ENCODE measurements at regions of chr3 and their contacts with region 1.

Region 1: GRCh38 chr3:63911873-63912767 is at the start of gene SCAANT1:
- DNase-seq: peak; percentile 73 to 86
- H3K4me3 ChIP-seq: peak within 1 kb of the TSS; percentile 65
- H3K27ac ChIP-seq: peak within 1 kb of the TSS; percentile 55
- H3K4me1 ChIP-seq: peaks cover 39% of the 10 kb centered on the region
- H3K27me3 ChIP-seq: no peaks in the 10 kb centered on the region
- CTCF ChIP-seq: no peak
- total RNA-seq, gene SCAANT1: not detected in 2 replicates

Region 2: GRCh38 chr3:62318750-62319569 is 1593.2 kb before region 1 on chr3:
- CTCF ChIA-PET with region 1: no interaction called
- POLR2A ChIA-PET with region 1: no interaction called
- intact Hi-C with region 1: loop called (anchors 10 kb)
- DNase-seq: peak; percentile 61 to 72
- H3K4me3 ChIP-seq: peak overlapping the region; percentile 90
- H3K27ac ChIP-seq: no peak overlapping the region
- H3K4me1 ChIP-seq: 0 out of 2 replicates have a peak, but pooled peaks cover 5% of the 10 kb centered on the region
- H3K27me3 ChIP-seq: no peaks in the 10 kb centered on the region
- CTCF ChIP-seq: no peak

Region 3: GRCh38 chr3:63845215-63845614 is 66.9 kb before region 1 on chr3:
- CTCF ChIA-PET with region 1: no interaction called
- POLR2A ChIA-PET with region 1: no interaction called
- intact Hi-C with region 1: no loop called
- DNase-seq: no peak
- H3K4me3 ChIP-seq: no peak overlapping the region
- H3K27ac ChIP-seq: no peak overlapping the region
- H3K4me1 ChIP-seq: peaks cover 17% of the 10 kb centered on the region
- H3K27me3 ChIP-seq: no peaks in the 10 kb centered on the region
- CTCF ChIP-seq: no peak

Region 4: DNA sequence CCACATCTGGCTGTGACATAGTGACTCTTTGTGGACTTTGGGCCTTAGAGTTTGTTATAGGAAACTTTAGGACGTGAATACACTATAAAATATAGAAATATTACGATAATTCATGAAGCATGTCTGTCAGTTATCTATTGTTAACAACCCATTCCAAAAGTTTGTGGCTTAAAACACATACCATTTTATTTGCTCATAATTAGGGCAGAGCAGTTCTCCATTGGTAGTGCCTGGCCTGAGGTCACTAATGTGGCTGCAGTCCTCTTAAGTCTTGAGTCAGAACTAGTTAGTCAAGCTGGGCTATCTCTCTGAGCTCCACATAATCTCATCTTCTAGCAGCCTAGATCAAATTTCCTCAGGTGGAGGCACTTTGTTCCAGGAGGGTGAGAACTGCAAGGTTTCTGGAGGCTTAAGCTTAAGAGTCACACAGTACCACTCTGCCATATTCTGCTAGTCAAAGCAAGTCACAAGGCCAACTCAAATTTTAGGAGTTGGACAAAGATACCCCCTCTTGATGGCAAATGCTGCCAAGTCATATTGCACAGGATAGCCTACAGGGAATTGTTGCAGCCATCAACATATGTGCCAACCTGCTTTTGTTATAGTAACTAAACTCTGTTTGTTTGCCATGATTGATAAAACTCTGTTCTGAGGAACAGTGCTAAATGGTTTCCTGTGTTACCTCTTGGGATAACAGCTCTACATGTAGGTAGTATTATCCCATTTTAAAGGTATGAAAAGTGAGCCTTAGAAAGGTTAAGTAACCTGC is 39.8 kb before region 1 on chr3:
- CTCF ChIA-PET with region 1: no interaction called
- POLR2A ChIA-PET with region 1: no interaction called
- intact Hi-C with region 1: loop called (anchors 2 kb)
- DNase-seq: peak; percentile 63 to 91
- H3K4me3 ChIP-seq: peak overlapping the region; percentile 26; the same call in 1 of the 2 replicates
- H3K27ac ChIP-seq: peak overlapping the region; percentile 64
- H3K4me1 ChIP-seq: peaks cover 30% of the 10 kb centered on the region
- H3K27me3 ChIP-seq: no peaks in the 10 kb centered on the region
- CTCF ChIP-seq: no peak

Region 5: DNA sequence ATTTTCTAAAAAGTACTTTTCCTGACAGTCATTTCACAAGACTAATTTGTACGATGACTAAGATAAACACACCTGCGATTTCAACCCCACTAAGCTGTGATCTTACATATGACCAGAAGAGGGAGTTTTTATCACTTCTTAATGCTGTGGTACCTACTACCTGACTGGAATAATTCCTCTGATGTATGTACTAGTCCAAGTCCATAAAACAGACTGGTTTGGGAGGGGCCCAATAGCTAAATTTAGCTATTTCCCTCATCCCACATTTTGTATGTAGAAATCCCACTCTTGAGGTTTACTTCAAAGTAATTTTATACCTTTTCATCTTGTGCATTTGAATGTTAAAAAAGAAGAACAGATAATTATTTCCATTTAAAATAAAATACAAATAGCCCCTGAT is 49.8 kb after region 1 on chr3:
- CTCF ChIA-PET with region 1: interaction called, 19 read pairs
- POLR2A ChIA-PET with region 1: no interaction called
- intact Hi-C with region 1: loop called (anchors 5 kb)
- DNase-seq: peak in 1 of 2 experiments; percentile 65
- H3K4me3 ChIP-seq: no peak overlapping the region
- H3K27ac ChIP-seq: no peak overlapping the region
- H3K4me1 ChIP-seq: peaks cover 13% of the 10 kb centered on the region
- H3K27me3 ChIP-seq: no peaks in the 10 kb centered on the region
- CTCF ChIP-seq: peak; percentile 74

Region 6: DNA sequence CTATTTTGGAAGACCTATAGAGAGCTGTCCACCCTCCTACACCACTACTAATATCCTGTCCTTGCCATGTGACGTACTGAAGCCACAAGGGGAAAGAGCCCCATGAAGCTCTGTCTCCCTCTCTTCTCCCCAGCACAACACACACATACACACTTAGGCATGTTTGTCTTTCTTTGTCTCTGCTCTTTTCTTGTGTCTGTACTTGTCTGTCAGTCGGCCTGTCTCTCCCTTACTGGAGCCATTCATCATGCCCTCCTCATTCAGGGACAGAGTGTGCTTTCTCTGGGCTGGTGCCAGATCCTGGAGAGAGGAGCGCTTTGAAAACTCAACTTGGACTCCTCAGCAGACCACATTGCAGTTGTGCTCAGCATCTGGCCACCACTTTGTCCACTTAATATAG is 63.6 kb after region 1 on chr3:
- CTCF ChIA-PET with region 1: no interaction called
- POLR2A ChIA-PET with region 1: no interaction called
- intact Hi-C with region 1: loop called (anchors 5 kb)
- DNase-seq: no peak
- H3K4me3 ChIP-seq: no peak overlapping the region
- H3K27ac ChIP-seq: no peak overlapping the region
- H3K4me1 ChIP-seq: peaks cover 16% of the 10 kb centered on the region
- H3K27me3 ChIP-seq: no peaks in the 10 kb centered on the region
- CTCF ChIP-seq: no peak

Region 7: GRCh38 chr3:63993653-63994079 is 81.5 kb after region 1 on chr3:
- CTCF ChIA-PET with region 1: no interaction called
- POLR2A ChIA-PET with region 1: no interaction called
- intact Hi-C with region 1: loop called (anchors 1 kb)
- DNase-seq: peak; percentile 40 to 54
- H3K4me3 ChIP-seq: no peak overlapping the region
- H3K27ac ChIP-seq: no peak overlapping the region
- H3K4me1 ChIP-seq: no peaks in the 10 kb centered on the region
- H3K27me3 ChIP-seq: no peaks in the 10 kb centered on the region
- CTCF ChIP-seq: peak; percentile 82

Region 8: GRCh38 chr3:64520334-64520733 is 608.2 kb after region 1 on chr3:
- CTCF ChIA-PET with region 1: no interaction called
- POLR2A ChIA-PET with region 1: no interaction called
- intact Hi-C with region 1: no loop called
- DNase-seq: no peak
- H3K4me3 ChIP-seq: no peak overlapping the region
- H3K27ac ChIP-seq: no peak overlapping the region
- H3K4me1 ChIP-seq: no peaks in the 10 kb centered on the region
- H3K27me3 ChIP-seq: no peaks in the 10 kb centered on the region
- CTCF ChIP-seq: no peak

Measured in PC-9 (cell line).